RWPE1 (cell line): ENCODE measurements at regions of chr16 and their contacts with region 1.

Region 1: GRCh38 chr16:70289229-70290098 is at the start of gene AARS1:
- DNase-seq: peak; percentile 100
- H3K27ac ChIP-seq: peak within 1 kb of the TSS; percentile 94
- CTCF ChIP-seq: no peak

Region 2: DNA sequence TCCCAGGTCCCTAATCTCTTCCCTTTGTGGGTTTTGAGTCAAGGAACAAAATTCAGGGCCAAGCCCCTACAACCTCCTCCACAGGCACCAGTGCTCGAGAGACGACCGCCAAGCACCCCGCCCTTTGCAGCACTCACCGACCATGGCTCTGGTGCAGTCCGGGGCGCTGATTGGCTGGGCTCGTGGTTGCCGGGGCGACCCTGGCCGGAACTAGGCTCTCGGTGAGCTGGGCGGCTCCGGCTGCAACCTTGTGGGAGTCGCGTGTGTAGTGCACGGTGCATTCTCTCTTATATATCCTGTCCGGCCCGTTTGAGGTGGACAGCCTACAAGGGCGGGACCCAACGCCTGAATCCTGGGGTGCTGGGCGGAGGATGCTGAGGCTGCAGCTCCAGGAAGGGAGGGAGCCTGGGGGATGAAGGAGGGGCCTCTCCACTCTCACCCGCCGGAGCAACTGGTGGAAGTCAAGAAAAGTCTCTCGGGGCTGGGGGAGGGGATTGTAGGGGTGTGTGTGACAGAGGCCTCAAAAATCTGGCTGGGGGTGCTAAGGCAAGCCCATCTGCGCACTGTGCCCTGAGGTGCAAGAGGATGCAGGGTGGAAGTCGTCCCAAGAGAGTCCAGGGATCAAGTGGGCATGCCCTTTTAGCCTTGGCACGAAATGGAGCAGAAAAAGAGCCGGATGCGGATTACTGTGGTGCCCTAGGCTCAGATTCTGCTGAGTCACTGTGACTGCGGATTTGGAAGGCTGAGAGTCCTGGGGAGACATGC is 563.0 kb before region 1 on chr16 and contains the start of gene NQO1:
- CTCF ChIA-PET with region 1: no interaction called
- POLR2A ChIA-PET with region 1: interaction called, 10 read pairs
- DNase-seq: peak; percentile 96
- H3K27ac ChIP-seq: peak within 1 kb of the TSS; percentile 98
- CTCF ChIP-seq: no peak

Region 3: GRCh38 chr16:69942627-69943170 is 346.8 kb before region 1 on chr16:
- CTCF ChIA-PET with region 1: no interaction called
- POLR2A ChIA-PET with region 1: no interaction called
- DNase-seq: no peak
- H3K27ac ChIP-seq: no peak overlapping the region
- CTCF ChIP-seq: no peak